Caki2 (cell line): ENCODE measurements at regions of chr18 and their contacts with region 1.

Region 1: DNA sequence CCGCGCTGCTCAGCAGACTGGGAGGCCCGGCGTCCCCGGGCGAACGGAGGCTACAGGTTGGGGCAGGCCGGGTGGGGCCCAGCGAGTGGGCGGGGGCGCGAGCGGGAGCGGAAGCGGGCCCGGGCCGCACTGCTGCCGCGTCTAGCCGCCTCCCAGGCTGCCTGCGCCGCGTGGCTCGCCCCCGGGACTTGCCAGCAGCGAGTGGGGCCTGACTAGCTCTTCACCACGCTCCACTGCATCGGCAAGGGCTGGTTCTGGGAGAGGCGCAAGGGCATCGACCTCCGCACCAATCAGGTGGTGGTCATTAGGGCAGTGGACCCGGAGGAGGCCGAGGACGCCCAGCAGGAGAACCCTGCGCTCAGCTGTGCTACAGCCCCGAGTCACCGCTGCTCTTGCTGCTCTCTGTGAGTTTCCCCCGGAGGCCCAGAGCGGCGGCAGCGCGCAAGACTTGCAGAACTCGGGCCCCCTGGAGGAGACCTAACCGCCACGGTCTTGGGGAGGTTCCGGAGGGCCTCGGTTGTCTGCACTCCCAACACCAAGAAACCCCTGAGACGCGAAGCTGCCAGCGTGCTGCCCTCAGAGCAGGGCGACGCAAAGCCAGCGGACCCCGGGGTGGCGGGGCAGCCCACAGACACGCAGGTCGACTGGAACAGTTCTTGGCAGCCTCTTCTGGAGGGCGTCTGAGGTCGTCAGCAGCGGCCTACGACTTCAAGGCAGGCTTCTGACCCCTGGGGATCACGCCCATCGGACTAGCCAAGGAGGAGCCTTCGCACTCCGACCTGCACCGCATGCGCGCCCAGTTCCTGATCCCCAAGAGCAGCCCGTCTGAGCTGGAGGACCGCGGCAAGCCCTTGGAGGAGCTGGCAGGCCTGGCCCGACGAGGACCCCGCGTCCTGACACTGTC is 27.2 kb upstream of the PTPN2 start:
- DNase-seq: no peak

Region 2: GRCh38 chr18:12702221-12703095 is 208.8 kb before region 1 on chr18 and contains the starts of genes CEP76 and PSMG2:
- in situ Hi-C with region 1: loop called (anchors 25 kb)
- DNase-seq: peak; percentile 91
- total RNA-seq, gene CEP76: 21.5 and 22.4 TPM in 2 replicates
- total RNA-seq, gene PSMG2: 97.2 and 115 TPM in 2 replicates